PC-9 (cell line): ENCODE measurements at regions of chr21 and their contacts with region 1.

Region 1: DNA sequence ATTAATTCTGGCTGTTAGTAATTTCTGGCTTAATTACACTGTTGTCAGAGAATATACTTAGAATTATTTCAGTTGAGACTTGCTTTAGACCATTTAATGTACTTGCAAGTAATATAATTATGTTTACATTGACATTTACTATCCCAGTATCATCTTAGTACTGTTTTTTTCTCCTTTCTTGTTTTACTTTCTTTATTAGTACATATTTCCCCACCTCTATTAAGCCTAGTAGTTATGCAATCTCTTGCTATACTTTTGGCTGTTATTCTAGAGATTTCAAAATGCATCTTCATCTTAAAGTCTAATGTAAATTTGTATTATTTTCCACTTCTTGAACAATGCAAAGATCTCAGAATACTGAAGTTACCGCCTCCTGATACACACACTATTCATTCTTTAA is 24.4 kb downstream of the BRWD1 start:
- DNase-seq: no peak
- H3K4me3 ChIP-seq: no peak overlapping the region
- H3K27ac ChIP-seq: no peak overlapping the region
- H3K4me1 ChIP-seq: no peaks in the 10 kb centered on the region
- H3K27me3 ChIP-seq: no peaks in the 10 kb centered on the region
- CTCF ChIP-seq: no peak

Region 2: GRCh38 chr21:39313571-39314142 is 24.7 kb after region 1 on chr21 and contains the start of gene BRWD1:
- CTCF ChIA-PET with region 1: no interaction called
- POLR2A ChIA-PET with region 1: interaction called, 10 read pairs
- intact Hi-C with region 1: no loop called
- DNase-seq: peak; percentile 52 to 67
- H3K4me3 ChIP-seq: peak within 1 kb of the TSS; percentile 81
- H3K27ac ChIP-seq: peak within 1 kb of the TSS; percentile 85
- H3K4me1 ChIP-seq: peaks cover 22% of the 10 kb centered on the region
- H3K27me3 ChIP-seq: no peaks in the 10 kb centered on the region
- CTCF ChIP-seq: no peak; the same call in 1 of the 2 replicates
- total RNA-seq, gene BRWD1: 38.9 and 42.9 TPM in 2 replicates

Region 3: DNA sequence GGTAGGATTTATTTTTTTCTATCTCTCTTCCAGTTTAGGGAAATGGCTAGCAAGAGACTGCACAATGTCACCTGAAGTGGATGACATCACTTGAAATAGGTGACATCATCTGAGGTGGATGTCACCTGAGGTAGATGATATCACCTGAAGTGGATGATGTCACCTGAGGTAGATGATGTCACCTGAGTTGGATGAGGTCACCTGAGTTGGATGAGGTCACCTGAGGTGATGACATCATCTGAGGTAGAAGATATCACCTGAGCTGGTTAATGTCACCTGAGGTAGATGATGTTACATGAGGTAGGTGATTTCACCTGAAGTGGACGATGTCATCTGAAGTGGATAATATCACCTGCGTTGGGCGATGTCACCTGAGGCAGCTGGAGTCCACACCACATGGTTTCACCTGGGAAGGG is 1144.6 kb after region 1 on chr21:
- CTCF ChIA-PET with region 1: no interaction called
- POLR2A ChIA-PET with region 1: no interaction called
- intact Hi-C with region 1: no loop called
- DNase-seq: no peak
- H3K4me3 ChIP-seq: no peak overlapping the region
- H3K27ac ChIP-seq: no peak overlapping the region
- H3K4me1 ChIP-seq: no peaks in the 10 kb centered on the region
- H3K27me3 ChIP-seq: no peaks in the 10 kb centered on the region
- CTCF ChIP-seq: no peak